Activated CD4-positive, alpha-beta memory T cell treated with anti-CD3 and anti-CD28 coated beads, Interleukin-2, amount 10 ng/mL, durations not matched to agents 7 days and 5 days (primary cell): ENCODE measurements at regions of chr1 and their contacts with region 1.

Region 1: GRCh38 chr1:150186789-150187559 is 37.3 kb downstream of the PLEKHO1 start:
- DNase-seq: peak; percentile 32
- H3K4me3 Mint-ChIP-seq: peak overlapping the region; percentile 16
- H3K27ac Mint-ChIP-seq: peak overlapping the region; percentile 41
- H3K4me1 Mint-ChIP-seq: peaks cover 19% of the 10 kb centered on the region
- H3K27me3 Mint-ChIP-seq: no peaks in the 10 kb centered on the region

Region 2: GRCh38 chr1:149962123-149962548 is 224.8 kb before region 1 on chr1:
- CTCF ChIA-PET with region 1: interaction called, 38 read pairs
- POLR2A ChIA-PET with region 1: interaction called, 3 read pairs
- DNase-seq: peak; percentile 54
- H3K4me3 Mint-ChIP-seq: no peak overlapping the region
- H3K27ac Mint-ChIP-seq: no peak overlapping the region
- H3K4me1 Mint-ChIP-seq: peaks cover 23% of the 10 kb centered on the region
- H3K27me3 Mint-ChIP-seq: no peaks in the 10 kb centered on the region

Region 3: DNA sequence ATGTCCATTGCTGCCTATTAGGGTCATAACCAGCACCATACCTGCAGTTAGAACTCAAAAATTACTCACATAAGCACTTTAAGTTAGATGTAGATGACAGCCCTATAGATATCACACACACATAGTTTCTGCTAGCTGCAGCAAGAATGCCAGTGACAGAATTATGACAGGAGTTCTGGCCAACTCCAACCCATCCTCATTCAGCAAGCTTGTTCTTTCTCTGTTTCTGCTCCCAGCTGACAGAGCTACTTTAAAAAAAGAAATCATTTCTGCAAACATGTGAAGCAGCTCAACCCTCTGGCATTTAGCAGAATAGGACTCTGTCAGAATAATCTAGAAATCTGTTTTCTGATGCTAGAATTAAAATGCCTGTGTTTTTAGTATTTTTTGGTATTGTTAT is 152.6 kb before region 1 on chr1:
- CTCF ChIA-PET with region 1: interaction called, 15 read pairs
- POLR2A ChIA-PET with region 1: no interaction called
- DNase-seq: no peak
- H3K4me3 Mint-ChIP-seq: no peak overlapping the region
- H3K27ac Mint-ChIP-seq: no peak overlapping the region
- H3K4me1 Mint-ChIP-seq: no peaks in the 10 kb centered on the region
- H3K27me3 Mint-ChIP-seq: peaks cover 10% of the 10 kb centered on the region

Region 4: DNA sequence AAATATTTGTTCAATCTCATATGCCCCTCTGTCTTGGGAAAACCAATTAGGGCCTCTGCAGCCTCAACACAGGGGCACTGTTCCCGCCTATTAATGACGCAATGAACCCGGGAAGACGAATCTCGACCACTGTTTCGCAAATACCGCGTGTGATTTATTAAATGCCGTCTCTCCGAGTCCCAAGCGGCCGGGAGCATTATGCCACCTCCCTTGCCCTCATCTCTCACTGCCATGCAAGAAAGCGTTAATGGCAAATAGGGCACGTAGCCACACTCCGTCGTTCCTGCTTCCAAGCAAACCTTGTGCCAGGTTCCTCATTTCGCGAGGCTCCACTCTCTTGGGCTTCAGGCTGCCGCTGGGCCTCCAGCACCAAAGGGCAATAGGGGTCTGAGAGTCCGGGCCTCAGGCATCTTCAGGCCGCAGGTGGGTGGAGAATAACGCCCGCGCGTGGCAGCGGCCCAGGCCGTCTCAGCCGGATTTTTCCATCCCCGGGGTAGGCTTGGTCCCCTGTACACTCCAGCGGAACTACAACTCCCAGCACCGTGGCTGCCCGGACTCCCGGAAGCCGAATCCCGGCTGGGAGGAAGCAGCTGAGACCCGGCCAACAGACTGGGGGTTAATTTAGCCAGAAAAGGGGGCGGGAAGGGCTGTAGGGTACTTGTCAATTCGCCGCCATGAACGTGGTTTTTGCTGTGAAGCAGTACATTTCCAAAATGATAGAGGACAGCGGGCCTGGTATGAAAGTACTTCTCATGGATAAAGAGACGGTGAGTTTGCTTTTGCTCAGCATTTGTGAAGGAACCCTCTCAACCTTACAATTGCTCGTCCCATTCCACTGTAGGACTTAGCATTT is 119.6 kb before region 1 on chr1 and contains the start of gene VPS45:
- CTCF ChIA-PET with region 1: interaction called, 120 read pairs
- POLR2A ChIA-PET with region 1: interaction called, 13 read pairs
- DNase-seq: peak; percentile 86
- H3K4me3 Mint-ChIP-seq: peak within 1 kb of the TSS; percentile 95
- H3K27ac Mint-ChIP-seq: peak within 1 kb of the TSS; percentile 89
- H3K4me1 Mint-ChIP-seq: peaks cover 39% of the 10 kb centered on the region
- H3K27me3 Mint-ChIP-seq: no peaks in the 10 kb centered on the region
- total RNA-seq, gene VPS45: 35.4 to 39.0 TPM

Region 5: GRCh38 chr1:150106341-150106740 is 80.6 kb before region 1 on chr1:
- CTCF ChIA-PET with region 1: interaction called, 6 read pairs
- POLR2A ChIA-PET with region 1: interaction called, 10 read pairs
- DNase-seq: no peak
- H3K4me3 Mint-ChIP-seq: peak overlapping the region; percentile 35
- H3K27ac Mint-ChIP-seq: peak overlapping the region; percentile 80
- H3K4me1 Mint-ChIP-seq: peaks cover 59% of the 10 kb centered on the region
- H3K27me3 Mint-ChIP-seq: no peaks in the 10 kb centered on the region

Region 6: GRCh38 chr1:150118716-150119115 is 68.3 kb before region 1 on chr1:
- CTCF ChIA-PET with region 1: no interaction called
- POLR2A ChIA-PET with region 1: no interaction called
- DNase-seq: no peak
- H3K4me3 Mint-ChIP-seq: no peak overlapping the region
- H3K27ac Mint-ChIP-seq: no peak overlapping the region
- H3K4me1 Mint-ChIP-seq: peaks cover 13% of the 10 kb centered on the region
- H3K27me3 Mint-ChIP-seq: no peaks in the 10 kb centered on the region

Region 7: GRCh38 chr1:150168960-150169601 is 17.9 kb before region 1 on chr1:
- CTCF ChIA-PET with region 1: interaction called, 61 read pairs
- POLR2A ChIA-PET with region 1: interaction called, 3 read pairs
- DNase-seq: peak; percentile 65
- H3K4me3 Mint-ChIP-seq: no peak overlapping the region
- H3K27ac Mint-ChIP-seq: no peak overlapping the region
- H3K4me1 Mint-ChIP-seq: peaks cover 13% of the 10 kb centered on the region
- H3K27me3 Mint-ChIP-seq: peaks cover 2% of the 10 kb centered on the region

Region 8: GRCh38 chr1:150235852-150236613 is 49.1 kb after region 1 on chr1 and contains the start of gene ANP32E:
- CTCF ChIA-PET with region 1: interaction called, 9 read pairs
- POLR2A ChIA-PET with region 1: interaction called, 13 read pairs
- DNase-seq: peak; percentile 96
- H3K4me3 Mint-ChIP-seq: no peak within 1 kb of the TSS
- H3K27ac Mint-ChIP-seq: no peak within 1 kb of the TSS
- H3K4me1 Mint-ChIP-seq: peaks cover 22% of the 10 kb centered on the region
- H3K27me3 Mint-ChIP-seq: no peaks in the 10 kb centered on the region
- total RNA-seq, gene ANP32E: 185 TPM